Left lung (tissue), 14 donors: ENCODE measurements at regions of chr3 and their contacts with region 1.

Region 1: GRCh38 chr3:177126015-177126773 is 71.1 kb downstream of the TBL1XR1 start:
- DNase-seq: no peak
- ATAC-seq: peak; percentile 44
- H3K4me3 ChIP-seq: no peak overlapping the region
- H3K27ac ChIP-seq: no peak overlapping the region
- H3K4me1 ChIP-seq: peaks cover 0 to 42% of the 10 kb centered on the region in 2 donors
- H3K27me3 ChIP-seq: no peaks in the 10 kb centered on the region
- CTCF ChIP-seq: no peak

Region 2: DNA sequence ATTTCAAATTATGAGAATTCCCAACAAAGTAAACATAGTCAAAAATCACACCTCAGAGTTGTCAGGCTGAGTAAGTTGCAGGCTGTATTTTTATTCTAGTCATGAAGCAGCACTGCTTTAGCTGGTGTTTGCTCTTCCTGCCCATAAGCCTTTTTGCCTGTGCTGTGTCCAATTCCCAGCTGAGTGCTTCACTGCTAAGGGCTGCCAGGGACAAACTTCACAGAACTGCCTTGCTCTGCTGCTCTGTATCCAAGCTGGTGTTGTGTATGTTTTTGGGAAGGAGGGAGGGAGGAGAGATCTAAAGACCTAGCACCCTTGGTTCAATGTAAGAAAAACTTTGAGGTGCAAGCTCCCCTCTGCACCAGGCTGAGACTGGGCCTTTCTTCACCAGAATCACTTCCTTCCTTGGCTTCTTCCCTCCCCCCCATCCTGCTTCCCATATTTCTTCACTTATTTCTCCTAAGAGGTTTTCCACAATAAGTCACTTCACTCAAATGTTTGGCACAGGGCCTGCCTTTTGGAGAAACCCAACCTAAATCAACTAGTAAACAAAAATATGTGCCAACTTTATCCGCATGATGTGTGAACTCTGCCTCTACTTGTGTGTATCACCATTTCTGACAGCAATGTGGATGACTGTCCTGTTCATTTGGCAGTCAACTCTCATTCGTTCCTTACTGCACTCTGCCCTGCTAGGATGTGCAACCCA is 85.0 kb before region 1 on chr3:
- intact Hi-C with region 1: no loop called
- DNase-seq: peak in 2 of 4 donors; percentile 51 to 64
- ATAC-seq: peak; percentile 89
- H3K4me3 ChIP-seq: no peak overlapping the region
- H3K27ac ChIP-seq: peak overlapping the region in 1 of 2 donors; percentile 55
- H3K4me1 ChIP-seq: peaks cover 2 to 24% of the 10 kb centered on the region in 2 donors
- H3K27me3 ChIP-seq: no peaks in the 10 kb centered on the region
- CTCF ChIP-seq: no peak

Region 3: GRCh38 chr3:177069514-177070329 is 56.5 kb before region 1 on chr3:
- intact Hi-C with region 1: no loop called
- DNase-seq: no peak
- ATAC-seq: no peak
- H3K4me3 ChIP-seq: no peak overlapping the region
- H3K27ac ChIP-seq: no peak overlapping the region
- H3K4me1 ChIP-seq: peaks cover 3 to 9% of the 10 kb centered on the region in 2 donors
- H3K27me3 ChIP-seq: no peaks in the 10 kb centered on the region
- CTCF ChIP-seq: no peak

Region 4: GRCh38 chr3:177185035-177185574 is 58.9 kb after region 1 on chr3:
- intact Hi-C with region 1: loop called in 1 of 2 experiments (anchors 10 kb)
- DNase-seq: no peak
- ATAC-seq: no peak
- H3K4me3 ChIP-seq: no peak overlapping the region
- H3K27ac ChIP-seq: no peak overlapping the region
- H3K4me1 ChIP-seq: peaks cover 9 to 46% of the 10 kb centered on the region in 2 donors
- H3K27me3 ChIP-seq: no peaks in the 10 kb centered on the region
- CTCF ChIP-seq: no peak